ENCODE measurements at regions of chr10 and their contacts with region 1.

Region 1: DNA sequence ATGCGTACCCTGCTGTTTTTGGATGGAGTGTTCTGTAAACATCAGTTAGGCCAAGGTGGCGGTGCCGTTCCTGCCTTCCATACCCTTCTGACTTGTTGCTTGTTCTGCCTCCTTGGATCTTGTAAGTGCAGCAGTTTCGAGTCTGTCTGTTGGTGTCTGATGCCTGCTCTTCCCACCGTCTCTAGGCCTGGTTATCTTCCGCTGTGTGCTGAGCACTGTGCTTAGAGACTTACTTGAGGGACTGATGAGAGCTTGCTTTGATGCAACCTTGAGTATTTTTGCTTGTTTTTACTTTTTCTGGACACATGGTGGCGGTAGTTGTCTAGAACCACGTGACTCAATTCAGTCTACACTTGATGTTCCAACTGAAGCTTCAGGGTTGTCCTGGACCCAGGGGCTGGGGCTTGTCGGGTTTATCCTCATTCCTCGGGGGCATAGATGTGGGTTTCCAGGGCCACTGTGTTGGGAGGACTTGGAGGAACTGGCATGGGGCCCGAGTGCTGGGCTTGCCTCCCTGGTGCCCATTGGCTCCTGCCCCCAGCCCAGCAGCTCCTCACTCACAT is 14.4 kb upstream of the SPRN start:
- DNase-seq: peak in 1 of 9 donors; percentile 21
- ATAC-seq: peak; percentile 45
- H3K4me3 ChIP-seq: no peak overlapping the region
- H3K4me3 Mint-ChIP-seq: no peak overlapping the region
- H3K27ac ChIP-seq: no peak overlapping the region
- H3K27ac Mint-ChIP-seq: no peak overlapping the region
- H3K4me1 ChIP-seq: peaks cover 0 to 9% of the 10 kb centered on the region in 2 donors
- H3K4me1 Mint-ChIP-seq: peaks cover 0 to 26% (median 12%) of the 10 kb centered on the region in 7 donors
- H3K27me3 ChIP-seq: no peaks in the 10 kb centered on the region
- H3K27me3 Mint-ChIP-seq: peaks cover 4 to 21% (median 16%) of the 10 kb centered on the region in 5 donors

Region 2: DNA sequence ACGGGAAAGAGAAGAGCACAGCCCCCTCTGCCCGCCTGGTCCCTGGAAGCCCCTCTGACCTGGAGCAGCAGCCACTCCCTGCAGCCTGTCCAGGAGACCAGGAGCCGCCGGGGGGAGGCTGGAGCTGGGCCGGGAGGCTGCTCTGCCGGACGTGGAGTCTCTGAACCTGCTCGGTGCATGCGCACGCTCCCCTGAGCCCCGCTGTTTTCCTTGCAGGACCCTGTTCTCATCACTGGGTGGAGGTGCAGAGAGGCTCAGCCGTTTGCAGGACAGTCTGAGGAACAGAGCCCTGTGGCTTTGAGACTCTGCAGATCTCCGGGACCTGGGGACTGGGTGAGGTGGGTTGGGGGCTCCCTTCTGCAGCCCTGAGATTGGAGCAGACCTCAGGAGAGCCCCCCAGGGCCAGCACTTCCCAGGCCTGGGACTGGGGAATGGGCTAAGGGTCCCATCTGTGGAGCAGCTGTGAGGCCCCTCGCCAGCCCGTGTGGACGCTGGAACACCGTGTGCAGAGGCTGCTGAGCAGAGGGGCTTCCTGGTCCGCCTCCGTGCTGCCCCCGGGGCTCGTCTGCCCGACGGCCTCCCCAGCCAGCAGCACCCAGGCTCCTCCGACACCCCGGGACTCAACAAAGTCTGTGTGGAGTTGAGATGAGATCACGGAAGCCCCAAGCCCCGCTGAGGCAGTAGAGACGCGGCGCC is 399.5 kb before region 1 on chr10:
- CTCF ChIA-PET with region 1: no interaction called
- POLR2A ChIA-PET with region 1: no interaction called
- intact Hi-C with region 1: no loop called
- DNase-seq: no peak
- ATAC-seq: no peak
- H3K4me3 ChIP-seq: no peak overlapping the region
- H3K4me3 Mint-ChIP-seq: no peak overlapping the region
- H3K27ac ChIP-seq: no peak overlapping the region
- H3K27ac Mint-ChIP-seq: no peak overlapping the region
- H3K4me1 ChIP-seq: no peaks in the 10 kb centered on the region
- H3K4me1 Mint-ChIP-seq: peaks cover 0 to 2% (median 0%) of the 10 kb centered on the region in 7 donors
- H3K27me3 ChIP-seq: no peaks in the 10 kb centered on the region
- H3K27me3 Mint-ChIP-seq: peaks cover 0 to 7% (median 4%) of the 10 kb centered on the region in 5 donors

Region 3: GRCh38 chr10:133458710-133459453 is 20.1 kb after region 1 on chr10:
- CTCF ChIA-PET with region 1: no interaction called
- POLR2A ChIA-PET with region 1: no interaction called
- intact Hi-C with region 1: no loop called
- DNase-seq: no peak
- ATAC-seq: no peak
- H3K4me3 ChIP-seq: no peak overlapping the region
- H3K4me3 Mint-ChIP-seq: no peak overlapping the region
- H3K27ac ChIP-seq: no peak overlapping the region
- H3K27ac Mint-ChIP-seq: no peak overlapping the region
- H3K4me1 ChIP-seq: no peaks in the 10 kb centered on the region
- H3K4me1 Mint-ChIP-seq: peaks cover 0 to under 1% (median 0%) of the 10 kb centered on the region in 7 donors
- H3K27me3 ChIP-seq: no peaks in the 10 kb centered on the region
- H3K27me3 Mint-ChIP-seq: no peaks in the 10 kb centered on the region

Region 4: GRCh38 chr10:133520155-133520738 is 81.5 kb after region 1 on chr10:
- CTCF ChIA-PET with region 1: interaction called, 3 read pairs
- POLR2A ChIA-PET with region 1: no interaction called
- intact Hi-C with region 1: loop called (anchors 1 to 2 kb)
- DNase-seq: peak; percentile 79 to 94 (median 87)
- ATAC-seq: peak; percentile 100
- H3K4me3 ChIP-seq: peak overlapping the region; percentile 61
- H3K4me3 Mint-ChIP-seq: peak overlapping the region; percentile 39 to 76 (median 64)
- H3K27ac ChIP-seq: peak overlapping the region; percentile 52
- H3K27ac Mint-ChIP-seq: peak overlapping the region in 5 of 9 donors; percentile 26 to 81 (median 48)
- H3K4me1 ChIP-seq: peaks cover 8 to 12% of the 10 kb centered on the region in 2 donors
- H3K4me1 Mint-ChIP-seq: peaks cover 0 to 21% (median 11%) of the 10 kb centered on the region in 7 donors
- H3K27me3 ChIP-seq: no peaks in the 10 kb centered on the region
- H3K27me3 Mint-ChIP-seq: peaks cover 0 to 43% (median 15%) of the 10 kb centered on the region in 5 donors